Ascending aorta (tissue), 2 donors: ENCODE measurements at regions of chr12 and their contacts with region 1.

Region 1: DNA sequence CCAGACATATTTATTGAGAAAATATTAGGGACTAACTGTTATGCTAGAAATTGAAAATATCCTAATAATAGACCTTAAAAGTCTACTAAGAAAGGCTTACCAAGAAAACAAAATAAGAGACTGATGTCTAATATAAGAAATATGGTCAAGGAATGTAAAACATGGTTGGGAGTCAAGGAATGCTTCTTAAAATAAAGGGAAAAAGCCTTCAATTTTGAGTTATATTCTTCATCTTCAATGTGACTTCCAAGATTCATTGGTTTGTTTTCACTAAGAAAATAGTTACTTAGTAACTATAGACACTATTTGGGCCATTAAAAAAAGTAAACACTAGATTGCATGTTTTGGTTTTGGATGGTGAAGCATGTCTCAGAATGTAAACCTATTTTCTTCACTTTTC is 88.1 kb upstream of the ETV6 start:
- DNase-seq: no peak
- H3K4me3 ChIP-seq: no peak overlapping the region
- H3K27ac ChIP-seq: peak overlapping the region; percentile 60 to 74
- H3K4me1 ChIP-seq: peaks cover 0 to 17% of the 10 kb centered on the region in 2 donors
- H3K27me3 ChIP-seq: no peaks in the 10 kb centered on the region
- CTCF ChIP-seq: no peak

Region 2: GRCh38 chr12:11621797-11622423 is 60.5 kb after region 1 on chr12:
- intact Hi-C with region 1: loop called (anchors 1 kb)
- DNase-seq: no peak
- H3K4me3 ChIP-seq: no peak overlapping the region
- H3K27ac ChIP-seq: no peak overlapping the region
- H3K4me1 ChIP-seq: peaks cover 4 to 5% of the 10 kb centered on the region in 2 donors
- H3K27me3 ChIP-seq: no peaks in the 10 kb centered on the region
- CTCF ChIP-seq: peak in 1 of 3 experiments; percentile 12

Region 3: DNA sequence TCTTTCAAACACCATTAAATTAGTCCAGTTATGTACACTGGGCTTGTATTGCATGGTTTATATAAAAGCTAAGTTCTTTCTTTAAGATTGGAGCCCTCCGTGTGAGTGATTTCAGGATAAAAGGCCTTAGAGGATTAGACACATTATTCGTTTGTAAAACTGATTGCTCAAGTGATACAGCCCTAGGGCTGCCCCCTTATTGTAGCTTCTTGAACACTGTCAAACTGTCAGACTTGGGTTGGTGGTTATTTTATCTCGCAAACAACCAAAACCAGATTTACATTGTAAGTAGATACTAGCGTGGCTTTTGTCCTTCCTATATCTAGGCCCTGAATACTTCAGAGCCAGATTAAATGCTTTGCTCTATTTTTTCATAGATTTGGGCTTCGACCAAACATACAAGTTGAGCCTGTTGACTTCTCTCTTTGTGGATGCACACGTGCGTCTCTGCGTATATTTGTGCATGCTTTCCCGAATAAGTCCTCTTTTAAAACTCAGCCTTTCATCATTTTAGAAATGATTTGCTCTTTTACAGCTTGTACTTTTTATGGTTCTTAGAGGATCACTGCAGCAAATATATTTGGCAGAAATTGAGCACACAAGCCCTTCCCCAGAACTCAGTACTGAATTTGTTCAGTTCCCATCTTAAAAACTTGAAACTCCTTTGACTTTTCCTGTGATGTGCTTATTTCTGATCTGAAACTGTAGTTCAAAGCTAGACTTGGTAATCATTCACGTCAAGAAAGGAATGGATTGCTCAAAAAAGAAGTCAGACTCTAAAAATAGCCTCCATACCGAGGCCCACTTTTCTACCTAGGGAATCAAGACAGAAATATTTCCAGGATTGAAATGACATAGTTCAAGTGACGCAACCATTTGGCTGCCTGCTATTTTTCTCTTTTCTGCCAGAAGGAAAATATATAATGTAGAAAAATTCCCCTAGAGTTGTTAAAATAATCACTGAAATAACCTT is 217.6 kb after region 1 on chr12:
- intact Hi-C with region 1: no loop called
- DNase-seq: peak in 1 of 2 donors; percentile 81
- H3K4me3 ChIP-seq: peak overlapping the region in 1 of 2 donors; percentile 28
- H3K27ac ChIP-seq: peak overlapping the region; percentile 88 to 89
- H3K4me1 ChIP-seq: peaks cover 25 to 62% of the 10 kb centered on the region in 2 donors
- H3K27me3 ChIP-seq: no peaks in the 10 kb centered on the region
- CTCF ChIP-seq: no peak